Sigmoid colon (tissue), 7 donors: ENCODE measurements at regions of chr2 and their contacts with region 1.

Region 1: GRCh38 chr2:54206596-54206995 is 49.4 kb downstream of the TSPYL6 start:
- DNase-seq: no peak
- H3K4me3 ChIP-seq: no peak overlapping the region
- H3K27ac ChIP-seq: no peak overlapping the region
- H3K4me1 ChIP-seq: peaks cover 0 to 21% (median 14%) of the 10 kb centered on the region in 4 donors
- H3K27me3 ChIP-seq: no peaks in the 10 kb centered on the region
- CTCF ChIP-seq: peak; percentile 51 to 63 (median 53)
- EP300 ChIP-seq: no peak
- POLR2A ChIP-seq: no peak

Region 2: DNA sequence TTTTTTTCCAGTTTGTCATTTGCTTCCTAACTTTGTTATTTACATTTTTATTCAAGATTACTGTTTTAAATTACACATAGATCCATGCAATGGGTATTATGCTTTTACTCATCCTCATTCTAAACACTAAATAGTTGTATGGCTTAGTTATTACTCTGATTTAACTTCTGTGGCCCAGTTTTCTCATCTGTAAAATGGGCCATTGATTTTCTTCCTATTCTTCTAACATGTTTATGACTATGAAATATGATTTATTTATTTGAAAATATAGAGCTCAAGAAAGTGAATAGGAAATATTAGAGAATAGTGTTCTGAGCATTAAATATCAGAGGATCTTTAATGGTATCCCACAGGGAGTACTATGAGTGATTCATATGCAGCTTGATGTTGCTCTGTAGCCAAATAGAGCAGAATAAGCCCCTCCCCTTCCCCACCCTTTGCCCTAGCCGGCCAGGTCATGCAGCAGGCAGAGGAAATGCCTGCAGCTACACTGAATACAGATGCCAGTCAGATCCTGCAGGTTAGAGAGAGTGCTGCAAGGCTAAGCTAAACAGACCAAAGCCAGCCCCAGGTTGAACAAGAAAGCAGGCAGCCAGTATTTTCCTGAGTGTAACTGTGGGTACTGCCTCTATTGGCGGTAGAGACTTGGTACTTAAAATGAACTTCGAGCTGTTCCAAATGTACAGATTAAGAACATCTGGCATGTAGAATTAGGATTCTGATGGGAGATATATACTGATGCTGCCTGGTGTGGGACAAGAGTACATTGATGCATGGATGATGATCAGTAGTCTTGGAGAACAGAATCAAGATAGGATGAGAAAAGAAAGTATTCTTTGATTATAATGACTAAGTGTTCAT is 102.9 kb before region 1 on chr2:
- intact Hi-C with region 1: no loop called
- DNase-seq: no peak
- H3K4me3 ChIP-seq: no peak overlapping the region
- H3K27ac ChIP-seq: no peak overlapping the region
- H3K4me1 ChIP-seq: peaks cover 0 to 7% (median 0%) of the 10 kb centered on the region in 4 donors
- H3K27me3 ChIP-seq: no peaks in the 10 kb centered on the region
- CTCF ChIP-seq: no peak
- EP300 ChIP-seq: no peak
- POLR2A ChIP-seq: no peak

Region 3: DNA sequence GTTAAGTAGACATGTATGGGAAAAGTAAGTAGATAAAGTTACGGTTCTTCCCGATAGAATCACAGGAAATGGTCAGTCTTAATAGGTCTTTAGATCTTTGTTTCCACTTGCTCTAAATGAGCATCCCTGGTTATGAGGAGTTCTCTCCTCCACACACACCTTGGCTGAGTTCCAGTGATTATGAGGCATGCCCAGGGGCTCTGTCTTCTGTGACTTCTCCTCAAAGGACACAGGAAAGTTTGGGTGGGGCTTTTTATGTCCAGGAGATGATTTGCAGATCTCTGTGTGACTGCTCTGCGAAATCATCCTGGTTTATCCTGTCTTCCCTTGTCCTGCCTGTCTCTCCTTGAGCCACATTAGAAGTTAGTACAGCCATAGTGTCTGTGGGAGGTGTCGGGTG is 433.0 kb after region 1 on chr2:
- intact Hi-C with region 1: loop called (anchors 10 kb)
- DNase-seq: no peak
- H3K4me3 ChIP-seq: no peak overlapping the region
- H3K27ac ChIP-seq: peak overlapping the region in 2 of 4 donors; percentile 21 to 30
- H3K4me1 ChIP-seq: peaks cover 0 to 62% (median 52%) of the 10 kb centered on the region in 4 donors
- H3K27me3 ChIP-seq: no peaks in the 10 kb centered on the region
- CTCF ChIP-seq: no peak
- EP300 ChIP-seq: no peak
- POLR2A ChIP-seq: no peak